SK-N-SH (cell line): ENCODE measurements at regions of chr14 and their contacts with region 1.

Region 1: DNA sequence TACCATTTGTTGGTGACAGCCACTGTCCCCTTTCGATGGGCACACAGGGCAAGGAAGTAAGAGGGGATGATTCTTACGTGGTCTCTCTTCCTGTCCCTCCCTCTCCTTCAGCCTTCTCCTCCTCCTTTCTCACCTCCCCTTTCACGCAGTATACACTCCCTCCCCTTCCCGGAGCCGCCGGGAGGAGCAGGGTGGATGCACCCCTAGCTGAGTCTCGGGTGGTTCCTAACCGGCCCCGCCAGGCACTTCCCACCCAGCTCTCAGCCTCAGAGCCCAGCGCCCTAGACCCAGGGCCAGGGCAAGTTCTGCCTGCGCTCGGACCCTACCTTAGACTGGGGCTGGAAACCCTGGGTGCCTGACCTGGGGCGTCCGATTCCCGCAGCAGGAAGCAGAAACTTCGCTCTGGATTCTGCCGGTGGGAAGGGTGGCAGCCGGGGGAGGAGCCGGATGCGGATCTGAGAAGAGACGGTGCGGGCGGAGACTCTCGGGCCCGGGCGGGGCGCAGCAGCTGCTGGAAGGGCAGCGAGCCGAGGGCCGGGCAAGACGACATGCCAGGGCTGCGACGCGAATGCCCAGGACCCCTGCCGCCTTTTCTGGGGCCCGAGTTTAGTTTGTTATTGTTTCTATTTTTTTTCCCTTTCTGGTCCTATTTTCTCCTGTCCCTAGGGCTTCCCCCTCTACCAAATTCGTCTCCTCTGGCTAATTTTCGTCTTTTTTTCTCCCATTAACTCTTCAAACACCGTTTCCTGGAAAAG is at the start of gene TEP1:
- DNase-seq: peak; percentile 87
- H3K4me3 ChIP-seq: peak within 1 kb of the TSS; percentile 60 to 85
- H3K27ac ChIP-seq: peak within 1 kb of the TSS; percentile 92 to 95
- H3K4me1 ChIP-seq: peaks cover 0 to 17% of the 10 kb centered on the region in 2 experiments; a peak in 2 of 4 replicates
- H3K27me3 ChIP-seq: no peaks in the 10 kb centered on the region
- CTCF ChIP-seq: no peak
- EP300 ChIP-seq: no peak; a peak in 1 of 4 replicates
- RAD21 ChIP-seq: no peak
- polyA plus RNA-seq, gene TEP1: 12.1 and 13.3 TPM in 2 replicates

Region 2: DNA sequence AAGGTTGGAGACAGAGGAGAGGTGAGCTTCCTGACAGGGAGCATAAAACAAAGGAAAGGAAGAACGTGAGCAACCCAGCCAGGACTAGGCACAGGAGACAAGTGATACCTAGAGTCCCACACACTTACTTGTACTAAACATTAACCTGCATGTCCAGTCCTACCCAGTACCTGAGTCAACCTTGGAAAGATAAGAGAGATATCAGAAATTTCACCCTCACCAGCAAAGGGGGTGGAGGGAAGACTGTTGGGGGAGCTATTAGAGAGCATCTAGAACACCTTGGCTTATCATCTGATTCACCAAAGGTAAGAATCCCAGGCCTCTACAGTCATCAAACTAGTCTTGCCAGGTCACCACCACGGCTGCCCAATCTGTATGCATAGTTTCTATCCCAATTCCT is 11.6 kb after region 1 on chr14:
- CTCF ChIA-PET with region 1: interaction called, 19 read pairs
- POLR2A ChIA-PET with region 1: interaction called, 4 read pairs
- DNase-seq: no peak
- H3K4me3 ChIP-seq: no peak overlapping the region
- H3K27ac ChIP-seq: no peak overlapping the region
- H3K4me1 ChIP-seq: peaks cover 0 to 5% of the 10 kb centered on the region in 2 experiments; a peak in 1 of 4 replicates
- H3K27me3 ChIP-seq: no peaks in the 10 kb centered on the region; the same call in 1 of the 2 replicates
- CTCF ChIP-seq: no peak
- EP300 ChIP-seq: no peak
- RAD21 ChIP-seq: no peak